Activated naive CD4-positive, alpha-beta T cell treated with anti-CD3 and anti-CD28 coated beads for 36 hours (primary cell): ENCODE measurements at regions of chr12 and their contacts with region 1.

Region 1: GRCh38 chr12:89882050-89882449 is 173.4 kb upstream of the ATP2B1 start:
- DNase-seq: peak; percentile 53
- H3K4me3 Mint-ChIP-seq: no peak overlapping the region
- H3K27ac Mint-ChIP-seq: peak overlapping the region; percentile 63
- H3K4me1 Mint-ChIP-seq: peaks cover 42% of the 10 kb centered on the region
- H3K27me3 Mint-ChIP-seq: no peaks in the 10 kb centered on the region

Region 2: DNA sequence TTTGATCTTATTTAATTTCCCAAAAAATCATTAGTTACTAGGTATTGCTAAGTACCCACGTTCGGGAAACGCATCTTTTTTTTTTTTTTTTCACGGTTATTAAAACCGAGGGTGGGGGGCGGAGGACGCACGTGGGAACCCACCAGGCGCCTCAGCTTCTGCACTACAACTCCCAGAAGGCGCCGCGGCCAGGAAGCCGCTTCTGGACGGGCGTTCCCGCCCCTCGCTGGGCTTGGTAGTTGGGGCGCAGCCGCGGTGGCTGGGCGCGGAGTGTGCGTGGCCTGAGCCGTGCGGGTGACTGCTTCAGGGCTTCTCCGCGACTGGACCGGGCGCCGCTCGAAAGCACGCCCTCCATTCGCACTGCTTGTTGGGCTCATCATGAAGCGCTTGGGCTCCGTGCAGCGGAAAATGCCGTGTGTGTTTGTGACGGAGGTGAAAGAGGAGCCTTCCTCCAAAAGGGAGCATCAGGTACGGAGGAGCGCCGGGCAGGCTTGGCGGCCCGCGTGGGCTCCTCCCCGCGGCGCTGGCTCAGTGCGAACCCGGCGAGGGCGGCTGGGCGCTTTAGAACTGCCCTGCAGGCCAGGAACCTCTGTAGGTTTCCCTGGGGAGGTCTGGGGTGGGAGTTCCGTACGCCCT is 1846.7 kb before region 1 on chr12:
- CTCF ChIA-PET with region 1: no interaction called
- intact Hi-C with region 1: loop called (anchors 2 kb)
- DNase-seq: peak; percentile 89
- H3K4me3 Mint-ChIP-seq: peak overlapping the region; percentile 93
- H3K27ac Mint-ChIP-seq: peak overlapping the region; percentile 90
- H3K4me1 Mint-ChIP-seq: peaks cover 52% of the 10 kb centered on the region
- H3K27me3 Mint-ChIP-seq: no peaks in the 10 kb centered on the region

Region 3: GRCh38 chr12:89663577-89664357 is 218.3 kb before region 1 on chr12:
- CTCF ChIA-PET with region 1: no interaction called
- intact Hi-C with region 1: loop called (anchors 2 kb)
- DNase-seq: peak; percentile 38
- H3K4me3 Mint-ChIP-seq: peak overlapping the region; percentile 16
- H3K27ac Mint-ChIP-seq: peak overlapping the region; percentile 55
- H3K4me1 Mint-ChIP-seq: peaks cover 65% of the 10 kb centered on the region
- H3K27me3 Mint-ChIP-seq: no peaks in the 10 kb centered on the region

Region 4: GRCh38 chr12:89783357-89784060 is 98.5 kb before region 1 on chr12:
- CTCF ChIA-PET with region 1: no interaction called
- intact Hi-C with region 1: no loop called
- DNase-seq: no peak
- H3K4me3 Mint-ChIP-seq: no peak overlapping the region
- H3K27ac Mint-ChIP-seq: no peak overlapping the region
- H3K4me1 Mint-ChIP-seq: no peaks in the 10 kb centered on the region
- H3K27me3 Mint-ChIP-seq: no peaks in the 10 kb centered on the region

Region 5: DNA sequence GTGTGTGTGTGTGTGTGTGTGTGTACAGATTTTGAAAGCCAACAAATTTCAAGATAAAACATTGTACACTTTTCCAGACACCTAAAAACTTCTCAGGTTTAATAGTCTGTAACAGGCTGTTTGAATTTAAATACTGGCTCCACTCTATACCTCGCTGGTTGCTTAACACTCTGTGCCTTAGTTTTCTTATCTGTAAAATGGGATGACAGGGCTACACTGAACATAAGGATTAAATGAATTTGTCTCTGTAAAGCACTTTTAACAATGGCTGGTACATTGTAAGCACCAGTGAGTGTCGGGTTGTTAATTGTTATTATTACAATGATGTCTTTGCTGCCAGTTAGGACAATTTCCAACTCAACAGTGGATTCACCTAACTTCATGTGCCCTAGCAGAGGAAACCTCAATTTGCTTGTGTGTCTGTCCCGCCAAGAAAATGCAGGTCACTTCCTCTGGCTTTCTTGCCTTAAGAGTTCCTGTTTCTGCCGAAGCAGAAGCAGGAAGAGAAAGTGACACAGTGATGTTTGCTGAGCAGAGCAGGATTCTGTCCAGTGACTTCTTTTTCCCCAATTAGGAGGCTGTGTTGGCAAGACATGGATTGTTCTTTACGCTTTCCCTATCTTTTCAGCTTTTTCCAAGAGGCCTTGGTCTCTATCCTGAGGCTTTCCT is 19.4 kb before region 1 on chr12:
- CTCF ChIA-PET with region 1: no interaction called
- intact Hi-C with region 1: loop called (anchors 1 kb)
- DNase-seq: peak; percentile 57
- H3K4me3 Mint-ChIP-seq: peak overlapping the region; percentile 70
- H3K27ac Mint-ChIP-seq: peak overlapping the region; percentile 92
- H3K4me1 Mint-ChIP-seq: peaks cover 39% of the 10 kb centered on the region
- H3K27me3 Mint-ChIP-seq: no peaks in the 10 kb centered on the region

Region 6: DNA sequence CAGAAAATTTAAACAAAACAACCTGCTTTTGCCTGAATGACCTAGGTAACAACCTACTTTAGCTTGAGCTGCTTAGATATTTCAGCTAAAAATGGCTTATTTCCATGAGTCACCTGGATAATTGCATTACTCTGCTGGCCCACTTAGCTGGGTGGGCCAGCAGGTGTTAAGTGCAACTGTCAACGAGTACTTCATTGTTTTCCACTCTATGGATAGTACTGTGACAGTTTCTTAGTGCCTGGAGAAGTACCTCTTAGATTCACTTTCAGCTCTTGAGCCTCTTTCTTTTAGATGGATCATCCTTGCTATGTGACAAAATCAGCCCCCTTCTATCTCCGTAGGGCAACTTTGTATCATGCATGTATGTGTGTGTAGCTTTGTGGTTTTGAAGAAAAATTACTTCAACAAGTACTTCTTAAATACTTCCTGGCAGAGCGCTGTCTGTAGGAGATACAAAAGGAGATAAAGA is 194.8 kb after region 1 on chr12:
- CTCF ChIA-PET with region 1: no interaction called
- intact Hi-C with region 1: no loop called
- DNase-seq: no peak
- H3K4me3 Mint-ChIP-seq: no peak overlapping the region
- H3K27ac Mint-ChIP-seq: no peak overlapping the region
- H3K4me1 Mint-ChIP-seq: peaks cover 24% of the 10 kb centered on the region
- H3K27me3 Mint-ChIP-seq: peaks cover 4% of the 10 kb centered on the region

Region 7: DNA sequence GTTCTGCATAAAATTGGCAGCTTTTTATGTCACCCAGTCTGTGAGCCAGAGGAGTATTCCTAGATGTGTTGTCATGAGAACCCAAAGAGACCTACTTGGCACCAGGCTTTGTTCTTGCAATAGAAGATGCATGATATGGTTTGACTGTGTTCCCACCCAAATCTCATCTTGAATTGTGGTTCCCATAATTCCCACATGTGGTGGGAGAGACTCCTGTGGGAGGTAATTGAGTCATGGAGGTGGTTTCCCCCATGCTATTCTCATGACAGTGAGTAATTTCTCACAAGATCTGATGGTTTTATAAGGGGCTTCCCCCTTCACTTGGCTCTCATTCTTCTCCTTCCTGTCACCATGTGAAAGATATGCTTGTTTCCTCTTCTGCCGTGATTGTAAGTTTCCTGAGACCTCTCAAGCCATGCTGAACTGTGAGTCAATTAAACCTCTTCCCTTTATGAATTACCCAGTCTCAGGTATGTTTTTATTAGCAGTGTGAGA is 398.6 kb after region 1 on chr12:
- CTCF ChIA-PET with region 1: no interaction called
- intact Hi-C with region 1: loop called (anchors 10 kb)
- DNase-seq: peak; percentile 43
- H3K4me3 Mint-ChIP-seq: no peak overlapping the region
- H3K27ac Mint-ChIP-seq: peak overlapping the region; percentile 56
- H3K4me1 Mint-ChIP-seq: peaks cover 17% of the 10 kb centered on the region
- H3K27me3 Mint-ChIP-seq: peaks cover 9% of the 10 kb centered on the region